CD4-positive, alpha-beta T cell (primary cell): ENCODE measurements at regions of chr3 and their contacts with region 1.

Region 1: DNA sequence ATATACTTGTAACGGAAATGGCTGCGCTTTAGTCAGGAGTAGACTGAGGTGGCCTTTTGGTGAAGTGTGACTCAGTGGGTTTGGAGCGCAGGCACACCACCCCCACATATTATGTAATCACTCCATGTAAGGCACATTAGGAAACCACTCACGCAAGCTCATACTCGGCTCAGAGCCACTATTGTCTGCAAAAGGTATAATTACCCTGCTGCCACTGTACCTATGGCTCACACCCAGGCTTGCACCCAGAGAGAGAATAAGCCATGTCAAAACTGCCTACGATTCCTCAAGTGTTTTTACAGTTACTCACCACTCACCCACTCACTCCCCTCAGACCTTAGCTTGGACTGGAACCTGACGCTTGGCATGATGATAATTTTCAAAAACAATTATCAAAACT is 611.9 kb upstream of the CCDC54 start:
- DNase-seq: no peak
- ATAC-seq: no peak
- H3K4me3 ChIP-seq: no peak overlapping the region
- H3K4me3 Mint-ChIP-seq: no peak overlapping the region
- H3K27ac ChIP-seq: no peak overlapping the region
- H3K27ac Mint-ChIP-seq: no peak overlapping the region
- H3K4me1 ChIP-seq: no peaks in the 10 kb centered on the region
- H3K4me1 Mint-ChIP-seq: no peaks in the 10 kb centered on the region
- H3K27me3 ChIP-seq: no peaks in the 10 kb centered on the region
- H3K27me3 Mint-ChIP-seq: no peaks in the 10 kb centered on the region
- CTCF ChIP-seq: no peak

Region 2: DNA sequence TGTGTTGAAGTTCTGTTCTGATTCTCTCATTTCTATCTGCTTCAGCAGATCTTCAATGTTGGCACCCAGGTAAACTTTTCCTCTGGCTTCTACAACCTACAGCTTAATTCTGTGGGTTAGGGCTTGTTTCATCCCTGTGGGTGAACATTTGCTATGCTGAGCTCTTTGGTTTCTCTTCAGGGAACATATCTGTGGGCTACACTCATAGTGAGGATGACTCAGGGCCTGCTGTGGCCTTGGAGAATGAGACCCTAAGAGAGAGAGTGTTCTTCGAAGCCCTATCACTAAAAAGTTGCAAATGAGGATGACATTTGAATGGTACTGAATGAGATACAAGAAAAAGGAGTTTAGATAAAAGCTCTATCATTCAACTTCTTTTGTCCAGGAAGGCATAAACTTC is 550.3 kb before region 1 on chr3:
- CTCF ChIA-PET with region 1: no interaction called
- POLR2A ChIA-PET with region 1: no interaction called
- intact Hi-C with region 1: no loop called
- DNase-seq: no peak
- ATAC-seq: no peak
- H3K4me3 ChIP-seq: no peak overlapping the region
- H3K4me3 Mint-ChIP-seq: no peak overlapping the region
- H3K27ac ChIP-seq: no peak overlapping the region
- H3K27ac Mint-ChIP-seq: no peak overlapping the region
- H3K4me1 ChIP-seq: no peaks in the 10 kb centered on the region
- H3K4me1 Mint-ChIP-seq: peaks cover 6% of the 10 kb centered on the region
- H3K27me3 ChIP-seq: no peaks in the 10 kb centered on the region
- H3K27me3 Mint-ChIP-seq: no peaks in the 10 kb centered on the region
- CTCF ChIP-seq: no peak

Region 3: GRCh38 chr3:106255870-106256248 is 509.5 kb before region 1 on chr3:
- CTCF ChIA-PET with region 1: no interaction called
- POLR2A ChIA-PET with region 1: no interaction called
- intact Hi-C with region 1: no loop called
- DNase-seq: peak in 1 of 14 experiments; percentile 1
- ATAC-seq: no peak
- H3K4me3 ChIP-seq: no peak overlapping the region
- H3K4me3 Mint-ChIP-seq: no peak overlapping the region
- H3K27ac ChIP-seq: no peak overlapping the region
- H3K27ac Mint-ChIP-seq: no peak overlapping the region
- H3K4me1 ChIP-seq: no peaks in the 10 kb centered on the region
- H3K4me1 Mint-ChIP-seq: no peaks in the 10 kb centered on the region
- H3K27me3 ChIP-seq: no peaks in the 10 kb centered on the region
- H3K27me3 Mint-ChIP-seq: no peaks in the 10 kb centered on the region
- CTCF ChIP-seq: no peak

Region 4: DNA sequence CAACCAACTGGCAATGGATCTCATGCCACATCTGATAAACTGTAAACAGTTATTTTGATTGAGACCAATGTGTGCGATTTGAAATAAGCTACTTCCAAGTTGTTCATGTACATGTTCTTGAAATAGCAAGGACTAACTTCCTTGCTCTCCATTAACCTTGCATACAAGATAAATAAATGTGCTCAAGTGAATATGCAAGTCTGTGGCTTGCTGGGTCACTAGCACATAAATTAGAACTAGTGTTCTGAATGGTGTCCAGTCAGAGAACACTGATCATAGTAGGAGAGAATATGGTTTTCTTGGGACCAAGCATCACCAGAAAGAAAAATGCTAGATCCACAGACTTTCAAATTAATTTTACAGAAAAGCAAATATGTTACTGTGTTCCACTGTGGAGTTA is 28.1 kb before region 1 on chr3:
- CTCF ChIA-PET with region 1: no interaction called
- POLR2A ChIA-PET with region 1: no interaction called
- intact Hi-C with region 1: loop called in 1 of 2 experiments (anchors 1 kb)
- DNase-seq: no peak
- ATAC-seq: no peak
- H3K4me3 ChIP-seq: no peak overlapping the region
- H3K4me3 Mint-ChIP-seq: no peak overlapping the region
- H3K27ac ChIP-seq: no peak overlapping the region
- H3K27ac Mint-ChIP-seq: no peak overlapping the region
- H3K4me1 ChIP-seq: no peaks in the 10 kb centered on the region
- H3K4me1 Mint-ChIP-seq: no peaks in the 10 kb centered on the region
- H3K27me3 ChIP-seq: no peaks in the 10 kb centered on the region
- H3K27me3 Mint-ChIP-seq: no peaks in the 10 kb centered on the region
- CTCF ChIP-seq: no peak